Activated B cell treated with CpG ODN at 0.5 μM for 24 hours (primary cell): ENCODE measurements at regions of chr10 and their contacts with region 1.

Region 1: GRCh38 chr10:102120142-102120990 is at the start of gene LDB1:
- DNase-seq: peak; percentile 73
- ATAC-seq: peak; percentile 67
- H3K4me3 Mint-ChIP-seq: peak within 1 kb of the TSS; percentile 94
- H3K27ac Mint-ChIP-seq: peak within 1 kb of the TSS; percentile 94
- H3K4me1 Mint-ChIP-seq: peaks cover 55% of the 10 kb centered on the region
- H3K27me3 Mint-ChIP-seq: no peaks in the 10 kb centered on the region
- CTCF ChIP-seq: no peak
- total RNA-seq, gene LDB1: 54.0 and 61.9 TPM in 2 replicates

Region 2: GRCh38 chr10:101830322-101831168 is 289.8 kb before region 1 on chr10:
- CTCF ChIA-PET with region 1: no interaction called
- POLR2A ChIA-PET with region 1: interaction called, 10 read pairs
- intact Hi-C with region 1: no loop called
- DNase-seq: peak; percentile 89
- ATAC-seq: peak; percentile 75
- H3K4me3 Mint-ChIP-seq: peak overlapping the region; percentile 80
- H3K27ac Mint-ChIP-seq: peak overlapping the region; percentile 97
- H3K4me1 Mint-ChIP-seq: peaks cover 41% of the 10 kb centered on the region
- H3K27me3 Mint-ChIP-seq: no peaks in the 10 kb centered on the region
- CTCF ChIP-seq: no peak

Region 3: GRCh38 chr10:102064868-102065560 is 55.4 kb before region 1 on chr10 and contains the start of gene HPS6:
- CTCF ChIA-PET with region 1: no interaction called
- POLR2A ChIA-PET with region 1: interaction called, 4 read pairs
- intact Hi-C with region 1: loop called (anchors 1 kb)
- DNase-seq: peak; percentile 88
- ATAC-seq: peak; percentile 97
- H3K4me3 Mint-ChIP-seq: peak within 1 kb of the TSS; percentile 89
- H3K27ac Mint-ChIP-seq: peak within 1 kb of the TSS; percentile 90
- H3K4me1 Mint-ChIP-seq: peaks cover 24% of the 10 kb centered on the region
- H3K27me3 Mint-ChIP-seq: no peaks in the 10 kb centered on the region
- CTCF ChIP-seq: no peak
- total RNA-seq, gene HPS6: 22.8 and 23.0 TPM in 2 replicates

Region 4: GRCh38 chr10:102151774-102152544 is 31.6 kb after region 1 on chr10 and contains the start of gene NOLC1:
- CTCF ChIA-PET with region 1: no interaction called
- POLR2A ChIA-PET with region 1: interaction called, 9 read pairs
- intact Hi-C with region 1: loop called (anchors 1 kb)
- DNase-seq: peak; percentile 99
- ATAC-seq: peak; percentile 96
- H3K4me3 Mint-ChIP-seq: peak within 1 kb of the TSS; percentile 97
- H3K27ac Mint-ChIP-seq: peak within 1 kb of the TSS; percentile 93
- H3K4me1 Mint-ChIP-seq: peaks cover 35% of the 10 kb centered on the region
- H3K27me3 Mint-ChIP-seq: no peaks in the 10 kb centered on the region
- CTCF ChIP-seq: no peak
- total RNA-seq, gene NOLC1: 95.1 and 106 TPM in 2 replicates

Region 5: DNA sequence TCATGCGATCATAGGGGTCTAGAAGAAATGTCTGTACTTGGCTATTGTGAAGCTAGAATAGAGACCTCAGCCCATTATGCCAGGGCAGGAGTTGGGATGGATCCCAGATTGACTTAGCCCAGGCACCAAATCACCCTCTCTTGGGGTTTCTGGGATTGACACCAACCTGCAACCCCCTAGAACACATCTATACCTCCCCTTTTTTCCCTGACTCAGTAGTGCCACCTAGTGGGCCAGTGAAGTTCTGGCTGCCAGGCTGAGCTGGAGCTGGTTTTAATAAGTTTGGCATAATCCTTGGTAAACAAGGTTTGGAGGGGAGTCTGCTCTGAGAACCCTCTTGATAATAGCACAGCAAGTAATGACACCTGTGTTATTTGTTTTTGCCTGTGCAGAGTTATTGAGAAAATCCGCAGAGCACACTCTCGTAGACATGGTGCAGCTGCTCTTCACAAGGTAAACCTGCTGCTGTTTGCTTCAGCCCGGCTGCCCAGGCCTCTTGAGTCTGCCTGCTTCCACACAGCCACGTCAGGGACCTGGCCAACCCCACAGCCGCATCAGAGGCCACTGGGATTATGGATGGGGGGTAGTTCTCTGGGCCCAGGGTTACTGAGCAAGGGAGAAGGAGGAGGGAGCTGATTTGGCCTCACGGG is 231.8 kb after region 1 on chr10:
- CTCF ChIA-PET with region 1: no interaction called
- POLR2A ChIA-PET with region 1: no interaction called
- intact Hi-C with region 1: no loop called
- DNase-seq: peak; percentile 45
- ATAC-seq: peak; percentile 70
- H3K4me3 Mint-ChIP-seq: no peak overlapping the region
- H3K27ac Mint-ChIP-seq: no peak overlapping the region
- H3K4me1 Mint-ChIP-seq: no peaks in the 10 kb centered on the region
- H3K27me3 Mint-ChIP-seq: no peaks in the 10 kb centered on the region
- CTCF ChIP-seq: peak; percentile 81